Activated CD4-positive, alpha-beta T cell treated with anti-CD3 and anti-CD28 coated beads for 36 hours (primary cell): ENCODE measurements at regions of chr12 and their contacts with region 1.

Region 1: GRCh38 chr12:53379389-53380103 is 430 bp upstream of the SP1 start:
- DNase-seq: peak; percentile 96
- ATAC-seq: peak; percentile 82
- H3K4me3 Mint-ChIP-seq: no peak overlapping the region
- H3K27ac Mint-ChIP-seq: no peak overlapping the region
- H3K4me1 Mint-ChIP-seq: peaks cover 39% of the 10 kb centered on the region
- H3K27me3 Mint-ChIP-seq: no peaks in the 10 kb centered on the region

Region 2: GRCh38 chr12:53267999-53268647 is 111.4 kb before region 1 on chr12 and contains the start of gene ESPL1:
- CTCF ChIA-PET with region 1: interaction called, 4 read pairs
- POLR2A ChIA-PET with region 1: interaction called, 3 read pairs
- intact Hi-C with region 1: loop called in 1 of 2 experiments (anchors 1 kb)
- DNase-seq: peak; percentile 93
- ATAC-seq: peak; percentile 86
- H3K4me3 Mint-ChIP-seq: peak within 1 kb of the TSS; percentile 92
- H3K27ac Mint-ChIP-seq: peak within 1 kb of the TSS; percentile 98
- H3K4me1 Mint-ChIP-seq: peaks cover 30% of the 10 kb centered on the region
- H3K27me3 Mint-ChIP-seq: no peaks in the 10 kb centered on the region
- total RNA-seq, gene ESPL1: 60.8 to 66.9 TPM

Region 3: GRCh38 chr12:53352331-53353256 is 27.0 kb before region 1 on chr12:
- CTCF ChIA-PET with region 1: interaction called, 28 read pairs
- POLR2A ChIA-PET with region 1: no interaction called
- intact Hi-C with region 1: loop called (anchors 1 kb)
- DNase-seq: peak; percentile 91
- ATAC-seq: peak; percentile 100
- H3K4me3 Mint-ChIP-seq: no peak overlapping the region
- H3K27ac Mint-ChIP-seq: peak overlapping the region; percentile 56
- H3K4me1 Mint-ChIP-seq: peaks cover 8% of the 10 kb centered on the region
- H3K27me3 Mint-ChIP-seq: no peaks in the 10 kb centered on the region

Region 4: DNA sequence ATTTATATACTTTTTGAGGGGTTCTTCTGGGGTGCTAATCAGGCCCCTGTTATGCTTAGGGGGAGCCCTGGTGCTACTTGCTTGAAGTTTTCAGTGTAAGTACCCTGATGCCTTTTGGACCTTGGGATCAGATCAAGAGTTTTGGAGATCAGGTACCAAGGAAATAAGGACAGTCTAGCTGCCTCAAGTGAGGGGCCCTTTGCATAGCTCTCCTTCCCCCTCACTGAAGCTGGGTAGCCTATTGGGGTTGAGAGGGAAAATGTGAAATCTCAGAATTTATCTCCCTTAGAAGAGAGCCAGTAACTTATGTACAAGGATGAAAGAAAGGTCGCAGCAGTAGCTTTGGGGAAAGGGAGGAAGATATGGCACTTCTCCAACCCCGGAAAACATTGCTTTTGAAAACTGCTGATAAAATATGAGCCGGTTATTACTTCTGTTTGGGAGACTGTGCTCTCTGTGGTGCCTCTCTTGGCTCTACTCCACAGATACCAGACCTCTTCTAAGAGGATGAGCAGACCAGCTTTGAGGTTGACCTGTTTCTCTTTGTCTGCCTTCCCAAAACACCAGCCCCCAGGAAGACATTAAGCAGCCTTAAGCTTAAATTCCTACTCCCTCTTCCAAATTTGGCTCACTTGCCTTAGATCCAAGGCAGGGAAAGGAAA is 35.3 kb after region 1 on chr12:
- CTCF ChIA-PET with region 1: interaction called, 6 read pairs
- POLR2A ChIA-PET with region 1: interaction called, 5 read pairs
- intact Hi-C with region 1: loop called (anchors 1 to 2 kb)
- DNase-seq: no peak
- ATAC-seq: no peak
- H3K4me3 Mint-ChIP-seq: no peak overlapping the region
- H3K27ac Mint-ChIP-seq: no peak overlapping the region
- H3K4me1 Mint-ChIP-seq: peaks cover 66% of the 10 kb centered on the region
- H3K27me3 Mint-ChIP-seq: no peaks in the 10 kb centered on the region

Region 5: GRCh38 chr12:53451661-53452158 is 72.2 kb after region 1 on chr12 and contains the start of gene PCBP2:
- CTCF ChIA-PET with region 1: interaction called, 3 read pairs
- POLR2A ChIA-PET with region 1: interaction called, 4 read pairs
- intact Hi-C with region 1: loop called in 1 of 2 experiments (anchors 1 kb)
- DNase-seq: peak; percentile 99
- ATAC-seq: peak; percentile 97
- H3K4me3 Mint-ChIP-seq: peak within 1 kb of the TSS; percentile 94
- H3K27ac Mint-ChIP-seq: peak within 1 kb of the TSS; percentile 96
- H3K4me1 Mint-ChIP-seq: peaks cover 27% of the 10 kb centered on the region
- H3K27me3 Mint-ChIP-seq: no peaks in the 10 kb centered on the region
- total RNA-seq, gene PCBP2: 881 to 999 TPM

Region 6: DNA sequence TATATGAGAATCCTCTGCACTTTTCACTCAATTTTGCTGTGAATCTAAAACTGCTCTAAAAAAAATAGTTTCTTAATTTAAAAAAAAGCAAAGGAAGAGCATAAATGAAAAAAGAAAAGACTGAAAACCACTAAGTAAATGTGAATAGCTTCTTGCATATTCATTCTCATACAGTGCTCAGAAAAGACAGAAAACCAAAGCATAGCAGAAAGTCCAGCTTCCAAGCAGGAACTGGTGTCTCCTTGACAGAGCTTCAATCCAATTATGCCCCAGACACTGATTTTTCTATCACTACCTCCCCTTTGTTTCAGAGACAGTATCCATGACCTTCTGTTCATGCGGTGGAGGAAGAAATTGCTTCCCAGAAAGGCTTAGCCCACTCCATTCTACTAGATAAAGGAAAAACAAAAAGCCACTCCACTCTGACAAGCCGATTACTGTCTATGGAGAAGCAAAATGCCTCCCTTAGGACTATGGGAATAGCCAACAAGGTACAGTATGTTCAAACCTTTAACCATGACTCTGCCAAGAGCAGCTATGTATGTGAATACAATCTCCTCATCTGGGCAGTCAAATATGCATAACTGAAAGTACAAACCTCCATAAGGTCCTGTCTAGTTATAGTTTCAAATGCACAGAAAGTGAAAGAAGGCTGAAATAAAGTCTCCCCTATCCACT is 206.0 kb after region 1 on chr12:
- CTCF ChIA-PET with region 1: no interaction called
- POLR2A ChIA-PET with region 1: no interaction called
- intact Hi-C with region 1: no loop called
- DNase-seq: no peak
- ATAC-seq: no peak
- H3K4me3 Mint-ChIP-seq: no peak overlapping the region
- H3K27ac Mint-ChIP-seq: no peak overlapping the region
- H3K4me1 Mint-ChIP-seq: peaks cover 31% of the 10 kb centered on the region
- H3K27me3 Mint-ChIP-seq: no peaks in the 10 kb centered on the region

Region 7: DNA sequence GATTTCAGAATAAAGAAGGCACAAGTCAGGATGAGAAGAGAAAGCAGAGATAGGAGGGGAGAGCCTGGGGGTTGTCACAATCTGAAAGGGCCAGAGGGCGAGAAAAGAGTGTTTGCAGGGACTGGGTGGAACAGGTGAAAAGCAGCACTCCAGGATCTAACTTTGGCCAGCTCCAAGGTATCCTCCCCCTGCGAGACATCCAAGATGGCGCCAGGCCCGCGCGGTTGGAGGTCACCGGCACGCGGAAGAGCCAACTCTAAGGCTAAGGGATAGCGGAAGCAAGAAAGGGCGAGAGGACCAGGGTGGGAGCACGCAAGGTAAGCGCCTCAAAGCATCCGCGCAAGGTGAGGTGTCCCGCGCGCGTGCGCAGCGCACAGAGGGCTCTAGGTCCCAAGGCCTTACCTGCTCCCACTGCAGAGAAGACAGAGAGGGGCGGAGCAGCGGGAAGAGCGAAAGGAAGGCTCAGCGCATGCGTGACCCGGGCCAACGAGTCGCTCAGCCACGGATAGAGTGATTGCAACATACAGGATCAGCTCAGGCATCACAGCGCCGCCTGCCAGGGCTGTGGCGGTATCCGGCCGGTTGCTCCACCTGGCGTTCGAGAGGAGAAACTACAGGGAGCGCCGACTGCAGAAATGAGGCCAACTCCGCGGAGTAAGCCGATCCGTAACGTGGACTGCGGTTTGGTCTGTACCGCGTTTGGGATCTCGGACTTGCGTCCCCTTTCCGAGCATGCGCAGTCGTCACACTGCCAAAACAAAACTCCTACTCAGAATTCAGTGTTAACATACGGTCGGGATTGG is 296.3 kb after region 1 on chr12 and contains the start of gene ATP5MC2:
- CTCF ChIA-PET with region 1: no interaction called
- POLR2A ChIA-PET with region 1: no interaction called
- intact Hi-C with region 1: loop called in 1 of 2 experiments (anchors 1 kb)
- DNase-seq: peak; percentile 99
- ATAC-seq: peak; percentile 96
- H3K4me3 Mint-ChIP-seq: peak within 1 kb of the TSS; percentile 93
- H3K27ac Mint-ChIP-seq: peak within 1 kb of the TSS; percentile 95
- H3K4me1 Mint-ChIP-seq: peaks cover 29% of the 10 kb centered on the region
- H3K27me3 Mint-ChIP-seq: peaks cover 20% of the 10 kb centered on the region
- total RNA-seq, gene ATP5MC2: 356 to 415 TPM